Panc1 (cell line): ENCODE measurements at regions of chr14 and their contacts with region 1.

Region 1: GRCh38 chr14:106163306-106163705 is 636.9 kb downstream of the TMEM121 start:
- DNase-seq: no peak
- ATAC-seq: no peak
- H3K4me3 ChIP-seq: no peak overlapping the region
- H3K27ac ChIP-seq: no peak overlapping the region
- H3K4me1 ChIP-seq: no peaks in the 10 kb centered on the region
- H3K27me3 ChIP-seq: no peaks in the 10 kb centered on the region; the same call in 1 of the 2 replicates
- CTCF ChIP-seq: no peak

Region 2: DNA sequence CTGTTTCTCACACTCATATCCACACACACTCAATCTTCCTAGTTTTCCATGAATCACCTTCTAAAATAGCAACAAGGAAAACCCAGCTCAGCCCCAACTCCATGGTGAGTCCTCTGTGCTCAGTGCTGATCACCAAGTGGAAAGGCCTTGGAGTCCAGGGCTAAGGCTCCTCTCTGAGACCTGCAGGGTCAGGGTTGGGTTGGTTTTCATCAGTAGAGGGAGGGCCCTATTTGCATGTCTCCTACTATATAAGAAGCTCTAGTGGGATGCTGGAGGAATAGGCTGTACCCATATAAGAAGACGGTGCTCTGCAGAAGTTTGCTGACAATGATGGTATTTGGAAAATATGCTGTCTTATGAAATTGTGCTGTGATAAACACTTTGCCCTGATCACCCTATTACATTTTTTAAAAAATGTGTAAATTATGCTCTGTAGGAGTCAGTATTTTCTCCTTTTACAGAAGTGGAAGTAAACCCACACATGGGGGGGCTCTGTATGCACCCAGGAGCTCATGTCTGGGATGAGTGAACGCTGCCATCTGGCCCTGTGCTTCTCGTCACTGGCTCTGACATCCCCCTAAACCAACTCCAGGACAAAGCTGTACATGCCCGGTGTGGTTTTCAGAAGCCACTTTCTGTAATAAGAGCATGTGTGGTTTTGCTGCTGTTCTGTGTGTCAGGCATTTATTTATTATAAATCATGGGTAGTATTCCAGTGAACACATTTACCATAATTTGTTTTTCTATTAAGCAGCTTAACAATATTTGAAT is 100.6 kb before region 1 on chr14:
- CTCF ChIA-PET with region 1: no interaction called
- POLR2A ChIA-PET with region 1: no interaction called
- in situ Hi-C with region 1: no loop called
- intact Hi-C with region 1: loop called (anchors 10 kb)
- DNase-seq: no peak
- ATAC-seq: no peak
- H3K4me3 ChIP-seq: no peak overlapping the region
- H3K27ac ChIP-seq: no peak overlapping the region
- H3K4me1 ChIP-seq: no peaks in the 10 kb centered on the region
- H3K27me3 ChIP-seq: 0 out of 2 replicates have a peak, but pooled peaks cover 2% of the 10 kb centered on the region
- CTCF ChIP-seq: no peak